Left ventricle myocardium inferior (tissue), 1 donor: ENCODE measurements at regions of chr1 and their contacts with region 1.

Region 1: DNA sequence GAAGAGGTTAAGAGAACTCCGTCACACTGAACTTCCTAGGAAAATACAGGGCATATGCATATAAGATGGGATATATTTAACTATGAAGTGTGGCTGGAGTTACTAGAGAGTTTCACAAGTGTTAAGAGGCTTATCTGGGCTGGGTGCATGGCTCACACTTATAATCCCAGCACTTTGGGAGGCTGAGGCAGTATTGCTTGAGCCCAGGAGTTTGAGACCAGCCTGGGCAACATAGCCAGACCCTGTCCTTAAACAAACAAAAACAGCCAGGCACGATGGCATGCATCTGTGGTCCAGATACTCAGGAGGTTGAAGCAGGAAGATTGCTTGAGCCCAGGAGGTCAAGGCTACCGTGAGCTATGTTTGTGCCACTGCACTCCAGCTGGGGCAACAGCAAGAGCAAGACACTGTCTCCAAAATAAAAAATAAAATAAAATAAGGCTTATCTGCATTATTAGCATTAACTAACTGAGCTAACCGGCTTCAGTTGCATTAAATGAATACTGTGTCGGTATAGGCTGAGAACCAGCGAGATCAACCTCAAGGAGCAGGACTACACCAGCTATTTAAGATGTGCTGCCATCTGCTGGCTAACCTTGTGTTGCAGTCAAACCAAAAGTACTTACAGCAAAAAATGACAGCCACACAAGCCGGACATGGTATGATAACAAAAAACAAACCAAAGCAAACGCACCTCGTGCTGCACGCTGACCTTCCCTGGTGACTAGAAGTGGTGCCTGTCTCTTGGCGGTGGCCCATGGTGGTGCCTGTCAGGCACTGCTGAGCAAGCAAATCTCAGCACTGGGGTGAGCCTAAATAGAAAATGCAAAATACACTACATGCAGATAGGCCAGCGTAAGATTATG is 19.7 kb upstream of the RBBP5 start:
- DNase-seq: peak; percentile 57
- H3K4me3 ChIP-seq: peak overlapping the region; percentile 25
- H3K27ac ChIP-seq: peak overlapping the region; percentile 33
- H3K4me1 ChIP-seq: peaks cover 21% of the 10 kb centered on the region
- H3K27me3 ChIP-seq: no peaks in the 10 kb centered on the region
- CTCF ChIP-seq: peak; percentile 88

Region 2: GRCh38 chr1:205091043-205091740 is 50.3 kb before region 1 on chr1:
- intact Hi-C with region 1: no loop called
- DNase-seq: no peak
- H3K4me3 ChIP-seq: no peak overlapping the region
- H3K27ac ChIP-seq: no peak overlapping the region
- H3K4me1 ChIP-seq: no peaks in the 10 kb centered on the region
- H3K27me3 ChIP-seq: no peaks in the 10 kb centered on the region
- CTCF ChIP-seq: no peak

Region 3: GRCh38 chr1:205255941-205256780 is 114.7 kb after region 1 on chr1:
- intact Hi-C with region 1: loop called (anchors 10 kb)
- DNase-seq: peak; percentile 90
- H3K4me3 ChIP-seq: no peak overlapping the region
- H3K27ac ChIP-seq: peak overlapping the region; percentile 13
- H3K4me1 ChIP-seq: peaks cover 54% of the 10 kb centered on the region
- H3K27me3 ChIP-seq: no peaks in the 10 kb centered on the region
- CTCF ChIP-seq: peak; percentile 97